ENCODE measurements at regions of chr1 and their contacts with region 1.

Region 1: DNA sequence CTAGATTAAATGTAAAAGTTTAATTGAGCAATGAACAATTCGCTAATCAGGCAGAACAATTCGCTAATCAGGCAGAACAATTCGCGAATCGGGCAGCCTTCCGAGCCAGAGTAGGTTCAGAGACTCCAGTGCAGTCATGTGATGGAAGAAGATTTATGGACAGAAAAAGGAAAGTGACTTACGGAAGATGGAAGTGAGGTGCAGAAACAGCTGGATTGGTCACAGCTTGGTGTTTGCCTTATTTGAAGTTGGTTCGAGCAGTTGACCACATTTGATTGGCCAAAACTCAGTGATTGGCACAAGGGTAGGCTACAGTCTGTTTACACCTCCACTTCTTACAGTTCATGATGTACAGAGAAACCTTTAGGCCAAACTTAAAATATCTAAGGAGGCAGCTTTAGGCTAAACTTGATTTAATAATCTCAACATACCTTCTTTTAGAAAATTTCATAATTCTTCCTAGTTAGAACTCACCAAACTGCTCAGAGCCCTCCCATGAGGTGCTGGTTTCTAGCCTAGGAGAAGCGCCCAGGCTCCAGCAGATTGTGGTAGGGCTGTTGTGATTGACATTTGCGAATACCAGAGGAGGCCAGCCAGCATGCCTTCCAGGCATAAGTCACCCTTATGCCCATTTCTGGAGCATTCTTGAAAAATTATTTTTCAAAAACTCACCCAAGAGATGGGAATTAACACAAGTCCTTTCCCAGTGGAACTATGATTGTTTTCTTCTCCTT is 22.8 kb upstream of the KCNC4 start:
- DNase-seq: peak; percentile 74

Region 2: GRCh38 chr1:110220324-110220723 is 33.0 kb after region 1 on chr1:
- intact Hi-C with region 1: loop called in 1 of 2 experiments (anchors 2 kb)
- DNase-seq: no peak